Panc1 (cell line): ENCODE measurements at regions of chr17 and their contacts with region 1.

Region 1: GRCh38 chr17:16512011-16512410 is 20.0 kb upstream of the LRRC75A start:
- DNase-seq: no peak
- ATAC-seq: no peak
- H3K4me3 ChIP-seq: no peak overlapping the region
- H3K27ac ChIP-seq: no peak overlapping the region
- H3K4me1 ChIP-seq: no peaks in the 10 kb centered on the region
- H3K27me3 ChIP-seq: no peaks in the 10 kb centered on the region
- CTCF ChIP-seq: no peak

Region 2: GRCh38 chr17:16001226-16001897 is 510.6 kb before region 1 on chr17:
- CTCF ChIA-PET with region 1: no interaction called
- POLR2A ChIA-PET with region 1: no interaction called
- in situ Hi-C with region 1: no loop called
- intact Hi-C with region 1: no loop called
- DNase-seq: no peak
- ATAC-seq: no peak
- H3K4me3 ChIP-seq: peak overlapping the region; percentile 77 to 81
- H3K27ac ChIP-seq: peak overlapping the region; percentile 85; the same call in 1 of the 2 replicates
- H3K4me1 ChIP-seq: peaks cover 5% of the 10 kb centered on the region; the same call in 1 of the 2 replicates
- H3K27me3 ChIP-seq: no peaks in the 10 kb centered on the region
- CTCF ChIP-seq: no peak

Region 3: GRCh38 chr17:16459855-16460550 is 52.0 kb before region 1 on chr17:
- CTCF ChIA-PET with region 1: interaction called, 4 read pairs
- POLR2A ChIA-PET with region 1: interaction called, 15 read pairs
- in situ Hi-C with region 1: no loop called
- intact Hi-C with region 1: no loop called
- DNase-seq: no peak
- ATAC-seq: no peak
- H3K4me3 ChIP-seq: no peak overlapping the region
- H3K27ac ChIP-seq: no peak overlapping the region
- H3K4me1 ChIP-seq: no peaks in the 10 kb centered on the region; the same call in 1 of the 2 replicates
- H3K27me3 ChIP-seq: no peaks in the 10 kb centered on the region
- CTCF ChIP-seq: no peak